GM18951 (cell line): ENCODE measurements at regions of chr20 and their contacts with region 1.

Region 1: DNA sequence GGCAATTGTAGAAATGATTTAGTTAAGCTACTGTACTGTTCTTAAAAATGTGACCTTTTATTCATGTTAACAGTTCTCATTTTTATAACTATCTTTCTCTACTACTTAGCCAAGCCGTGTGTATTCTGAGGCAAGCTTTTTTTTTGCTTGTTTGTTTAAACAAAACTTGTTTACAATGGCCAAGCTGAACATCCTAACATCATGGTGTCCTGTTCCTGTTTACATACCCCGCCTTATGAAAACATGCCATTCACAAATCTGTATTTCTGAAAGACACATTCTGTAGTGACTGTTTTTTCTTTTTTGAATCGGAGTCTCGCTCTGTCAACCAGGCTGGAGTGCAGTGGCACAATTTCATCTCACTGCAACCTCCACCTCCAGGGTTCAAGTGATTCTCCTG is 140.9 kb downstream of the NCOA3 start:
- POLR2A ChIP-seq: no peak

Region 2: GRCh38 chr20:47196091-47197081 is 446.2 kb before region 1 on chr20:
- in situ Hi-C with region 1: no loop called
- POLR2A ChIP-seq: no peak

Region 3: DNA sequence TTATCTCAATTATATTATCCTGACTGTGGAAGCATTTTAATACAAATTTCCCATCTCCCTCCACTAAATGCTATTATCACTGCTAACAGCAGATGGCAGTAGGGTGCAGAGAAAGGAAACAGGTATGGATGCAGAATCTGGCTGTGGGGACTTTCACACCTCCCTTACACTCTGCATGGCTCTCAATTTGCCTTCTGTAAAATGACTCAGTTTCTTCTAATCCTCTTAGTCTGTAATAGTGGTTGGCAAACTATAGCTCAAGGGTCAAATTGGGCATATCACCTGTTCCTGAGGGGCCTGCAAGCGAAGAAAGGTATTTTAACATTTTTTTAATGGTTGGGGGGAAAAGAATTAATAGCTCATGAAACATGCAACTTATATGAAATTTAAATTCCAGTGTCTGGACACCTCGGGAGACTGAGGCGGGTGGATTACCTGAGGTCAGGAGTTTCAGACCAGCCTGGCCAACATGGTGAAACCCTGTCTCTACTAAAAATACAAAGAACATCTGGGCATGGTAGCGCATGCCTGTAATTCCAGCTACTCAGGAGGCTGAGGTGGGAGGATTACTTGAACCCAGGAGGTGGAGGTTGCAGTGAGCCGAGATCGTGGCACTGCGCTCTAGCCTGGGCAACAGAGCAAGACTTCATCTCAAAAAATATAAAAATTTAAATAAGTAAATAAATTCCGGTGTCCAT is 369.6 kb before region 1 on chr20:
- in situ Hi-C with region 1: loop called (anchors 25 kb)
- POLR2A ChIP-seq: no peak

Region 4: DNA sequence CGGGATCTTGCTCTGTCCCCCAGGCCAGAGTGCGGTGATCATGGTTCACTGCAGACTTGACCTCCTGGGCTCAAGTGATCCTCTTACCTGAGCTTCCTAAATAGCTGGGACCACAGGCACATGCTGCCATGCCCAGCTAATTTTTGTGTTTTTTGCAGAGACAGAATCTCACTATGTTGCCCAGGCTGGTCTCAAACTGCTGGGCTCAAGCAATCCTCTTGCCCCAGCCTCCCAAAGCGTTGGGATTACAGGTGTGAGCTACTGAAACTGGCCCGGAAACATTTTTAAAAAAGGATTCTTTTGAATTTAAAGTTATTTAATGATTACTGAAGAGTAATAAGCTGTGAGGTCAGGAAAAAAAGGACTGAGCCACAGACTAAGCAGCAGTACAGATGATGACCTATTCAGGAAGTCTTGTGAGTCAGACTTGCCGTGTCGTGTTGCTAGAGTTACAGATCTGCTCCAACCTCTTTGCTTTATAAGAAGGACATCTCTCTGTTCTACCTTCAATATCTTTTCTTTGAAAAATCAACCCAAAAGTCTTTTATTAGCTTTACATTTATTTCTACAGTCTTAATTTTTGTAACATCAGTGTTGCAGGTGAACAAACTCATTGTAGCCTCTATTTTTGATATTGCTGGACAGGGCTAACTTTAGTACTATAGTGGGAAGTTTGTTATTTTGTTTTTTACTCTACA is 32.2 kb before region 1 on chr20:
- in situ Hi-C with region 1: no loop called
- POLR2A ChIP-seq: no peak